CD8-positive, alpha-beta T cell (primary cell): ENCODE measurements at regions of chr19 and their contacts with region 1.

Region 1: GRCh38 chr19:46821498-46822409 is 28.9 kb downstream of the AP2S1 start:
- DNase-seq: peak; percentile 40 to 84 (median 61)
- ATAC-seq: peak; percentile 83
- H3K4me3 ChIP-seq: peak overlapping the region in 1 of 2 experiments; percentile 22
- H3K4me3 Mint-ChIP-seq: peak overlapping the region; percentile 49
- H3K27ac ChIP-seq: peak overlapping the region; percentile 15 to 77
- H3K27ac Mint-ChIP-seq: peak overlapping the region; percentile 92
- H3K4me1 ChIP-seq: peaks cover 36% of the 10 kb centered on the region
- H3K4me1 Mint-ChIP-seq: peaks cover 30% of the 10 kb centered on the region
- H3K27me3 ChIP-seq: no peaks in the 10 kb centered on the region
- H3K27me3 Mint-ChIP-seq: no peaks in the 10 kb centered on the region
- CTCF ChIP-seq: no peak

Region 2: GRCh38 chr19:46759206-46759605 is 62.5 kb before region 1 on chr19:
- CTCF ChIA-PET with region 1: interaction called, 18 read pairs
- POLR2A ChIA-PET with region 1: no interaction called
- intact Hi-C with region 1: no loop called
- DNase-seq: no peak
- ATAC-seq: no peak
- H3K4me3 ChIP-seq: no peak overlapping the region
- H3K4me3 Mint-ChIP-seq: no peak overlapping the region
- H3K27ac ChIP-seq: no peak overlapping the region
- H3K27ac Mint-ChIP-seq: no peak overlapping the region
- H3K4me1 ChIP-seq: no peaks in the 10 kb centered on the region
- H3K4me1 Mint-ChIP-seq: no peaks in the 10 kb centered on the region
- H3K27me3 ChIP-seq: no peaks in the 10 kb centered on the region
- H3K27me3 Mint-ChIP-seq: no peaks in the 10 kb centered on the region
- CTCF ChIP-seq: no peak

Region 3: GRCh38 chr19:46840136-46840942 is 18.6 kb after region 1 on chr19:
- CTCF ChIA-PET with region 1: interaction called, 15 read pairs
- POLR2A ChIA-PET with region 1: interaction called, 3 read pairs
- intact Hi-C with region 1: no loop called
- DNase-seq: peak in 6 of 9 experiments; percentile 52 to 83 (median 62)
- ATAC-seq: peak; percentile 95
- H3K4me3 ChIP-seq: no peak overlapping the region
- H3K4me3 Mint-ChIP-seq: no peak overlapping the region
- H3K27ac ChIP-seq: no peak overlapping the region
- H3K27ac Mint-ChIP-seq: no peak overlapping the region
- H3K4me1 ChIP-seq: no peaks in the 10 kb centered on the region
- H3K4me1 Mint-ChIP-seq: no peaks in the 10 kb centered on the region
- H3K27me3 ChIP-seq: no peaks in the 10 kb centered on the region
- H3K27me3 Mint-ChIP-seq: no peaks in the 10 kb centered on the region
- CTCF ChIP-seq: peak; percentile 77